GM12878 (cell line): ENCODE measurements at regions of chr10 and their contacts with region 1.

Region 1: GRCh38 chr10:77405771-77406241 is 231.8 kb downstream of the KCNMA1 start:
- DNase-seq: no peak
- ATAC-seq: peak; percentile 86
- H3K4me3 ChIP-seq: no peak overlapping the region
- H3K27ac ChIP-seq: no peak overlapping the region
- H3K4me1 ChIP-seq: no peaks in the 10 kb centered on the region; the same call in 1 of the 2 replicates
- H3K27me3 ChIP-seq: no peaks in the 10 kb centered on the region
- CTCF ChIP-seq: no peak
- EP300 ChIP-seq: no peak
- POLR2A ChIP-seq: no peak
- RAD21 ChIP-seq: no peak

Region 2: GRCh38 chr10:77319557-77319956 is 86.2 kb before region 1 on chr10:
- CTCF ChIA-PET with region 1: no interaction called
- POLR2A ChIA-PET with region 1: no interaction called
- RAD21 ChIA-PET with region 1: no interaction called
- SMC1A ChIA-PET with region 1: no interaction called
- in situ Hi-C with region 1: no loop called
- intact Hi-C with region 1: no loop called
- DNase-seq: no peak
- ATAC-seq: no peak
- H3K4me3 ChIP-seq: no peak overlapping the region
- H3K27ac ChIP-seq: no peak overlapping the region
- H3K4me1 ChIP-seq: no peaks in the 10 kb centered on the region
- H3K27me3 ChIP-seq: no peaks in the 10 kb centered on the region
- CTCF ChIP-seq: no peak
- EP300 ChIP-seq: no peak
- POLR2A ChIP-seq: no peak
- RAD21 ChIP-seq: no peak

Region 3: GRCh38 chr10:77494327-77494726 is 88.5 kb after region 1 on chr10:
- CTCF ChIA-PET with region 1: interaction called, 4 read pairs
- POLR2A ChIA-PET with region 1: interaction called, 3 read pairs
- RAD21 ChIA-PET with region 1: interaction called, 5 read pairs
- SMC1A ChIA-PET with region 1: interaction called, 4 read pairs
- in situ Hi-C with region 1: no loop called
- intact Hi-C with region 1: loop called (anchors 5 kb)
- DNase-seq: no peak
- ATAC-seq: peak; percentile 13
- H3K4me3 ChIP-seq: no peak overlapping the region
- H3K27ac ChIP-seq: no peak overlapping the region
- H3K4me1 ChIP-seq: peaks cover 14% of the 10 kb centered on the region
- H3K27me3 ChIP-seq: no peaks in the 10 kb centered on the region
- CTCF ChIP-seq: 0 out of 6 replicates have a peak, but pooled peaks of 1 of the 3 experiments have one; percentile 4
- EP300 ChIP-seq: no peak
- POLR2A ChIP-seq: no peak
- RAD21 ChIP-seq: no peak

Region 4: GRCh38 chr10:77501152-77501845 is 95.5 kb after region 1 on chr10:
- CTCF ChIA-PET with region 1: interaction called, 4 read pairs
- POLR2A ChIA-PET with region 1: no interaction called
- RAD21 ChIA-PET with region 1: no interaction called
- SMC1A ChIA-PET with region 1: interaction called, 13 read pairs
- in situ Hi-C with region 1: no loop called
- intact Hi-C with region 1: no loop called
- DNase-seq: no peak
- ATAC-seq: peak; percentile 32
- H3K4me3 ChIP-seq: no peak overlapping the region
- H3K27ac ChIP-seq: no peak overlapping the region
- H3K4me1 ChIP-seq: peaks cover 11% of the 10 kb centered on the region
- H3K27me3 ChIP-seq: no peaks in the 10 kb centered on the region
- CTCF ChIP-seq: no peak
- EP300 ChIP-seq: no peak
- POLR2A ChIP-seq: no peak
- RAD21 ChIP-seq: no peak